Activated naive CD4-positive, alpha-beta T cell treated with anti-CD3 and anti-CD28 coated beads, Interleukin-2, amount 10 ng/mL, durations not matched to agents 7 days and 5 days (primary cell): ENCODE measurements at regions of chr7 and their contacts with region 1.

Region 1: GRCh38 chr7:99990460-99990852 is 14.6 kb upstream of the AZGP1 start:
- DNase-seq: no peak
- H3K4me3 Mint-ChIP-seq: no peak overlapping the region
- H3K27ac Mint-ChIP-seq: no peak overlapping the region
- H3K4me1 Mint-ChIP-seq: peaks cover 17% of the 10 kb centered on the region
- H3K27me3 Mint-ChIP-seq: peaks cover 49% of the 10 kb centered on the region

Region 2: DNA sequence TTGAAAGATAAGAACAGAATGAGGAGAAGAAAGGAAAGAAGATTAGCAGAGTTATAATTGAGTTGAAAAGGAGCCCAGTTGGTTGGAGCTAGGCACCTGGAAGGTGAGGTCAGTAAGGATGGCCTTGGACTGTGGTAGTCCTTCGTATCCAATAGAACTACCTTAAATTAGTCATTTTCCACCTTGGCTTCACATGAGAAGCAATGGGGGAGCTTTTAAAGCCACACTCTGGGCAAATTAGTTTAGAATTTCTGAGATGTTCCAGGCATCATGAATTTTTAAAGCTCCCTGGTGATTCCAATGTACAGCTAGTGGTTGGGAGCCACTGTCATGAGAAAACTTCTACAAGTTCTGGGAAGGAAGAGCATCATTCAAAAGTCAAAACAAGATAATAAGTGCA is 283.4 kb before region 1 on chr7:
- CTCF ChIA-PET with region 1: no interaction called
- DNase-seq: no peak
- H3K4me3 Mint-ChIP-seq: no peak overlapping the region
- H3K27ac Mint-ChIP-seq: no peak overlapping the region
- H3K4me1 Mint-ChIP-seq: no peaks in the 10 kb centered on the region
- H3K27me3 Mint-ChIP-seq: no peaks in the 10 kb centered on the region

Region 3: DNA sequence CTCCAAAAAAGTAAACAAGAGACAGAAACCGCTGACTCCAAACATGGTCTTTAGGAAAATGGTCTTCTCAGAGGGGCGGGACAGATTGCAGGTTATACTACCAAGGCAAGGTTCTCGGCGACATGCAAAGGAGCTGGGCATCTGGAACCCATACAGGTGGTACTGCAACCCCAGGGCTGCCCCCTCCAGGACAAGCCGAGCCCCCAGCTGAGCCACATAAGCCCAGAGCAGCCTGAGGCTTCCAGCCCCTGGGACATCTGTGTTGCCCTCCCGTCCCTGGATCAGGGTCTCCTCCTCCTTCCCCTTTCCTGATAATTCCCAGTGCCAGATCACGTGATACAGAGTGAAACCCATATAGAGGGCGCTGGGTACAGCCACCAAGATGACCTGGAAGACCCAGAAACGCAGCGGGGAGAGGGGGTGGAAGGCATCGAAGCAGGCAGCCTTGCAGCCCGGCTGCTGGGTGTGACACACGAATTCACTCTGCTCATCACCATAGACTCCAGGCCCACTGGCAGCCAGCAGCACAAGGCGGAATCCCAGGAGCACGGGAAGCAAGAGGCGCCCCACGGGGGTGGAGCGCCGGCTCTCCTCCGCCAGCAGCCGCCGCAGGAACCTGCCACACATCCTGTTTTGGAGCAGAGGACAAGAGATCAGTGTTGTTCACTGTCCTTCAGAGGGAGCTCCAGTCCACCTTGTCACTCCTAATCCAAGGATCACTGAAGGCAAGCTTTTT is 61.3 kb before region 1 on chr7 and contains the start of gene GJC3:
- CTCF ChIA-PET with region 1: interaction called, 11 read pairs
- DNase-seq: peak; percentile 68
- H3K4me3 Mint-ChIP-seq: peak within 1 kb of the TSS; percentile 56
- H3K27ac Mint-ChIP-seq: peak within 1 kb of the TSS; percentile 53
- H3K4me1 Mint-ChIP-seq: peaks cover 30% of the 10 kb centered on the region
- H3K27me3 Mint-ChIP-seq: peaks cover 45% of the 10 kb centered on the region

Region 4: GRCh38 chr7:99975782-99976521 is 14.5 kb before region 1 on chr7 and contains the start of gene AZGP1:
- CTCF ChIA-PET with region 1: interaction called, 23 read pairs
- DNase-seq: no peak
- H3K4me3 Mint-ChIP-seq: no peak within 1 kb of the TSS
- H3K27ac Mint-ChIP-seq: no peak within 1 kb of the TSS
- H3K4me1 Mint-ChIP-seq: no peaks in the 10 kb centered on the region
- H3K27me3 Mint-ChIP-seq: peaks cover 25% of the 10 kb centered on the region

Region 5: DNA sequence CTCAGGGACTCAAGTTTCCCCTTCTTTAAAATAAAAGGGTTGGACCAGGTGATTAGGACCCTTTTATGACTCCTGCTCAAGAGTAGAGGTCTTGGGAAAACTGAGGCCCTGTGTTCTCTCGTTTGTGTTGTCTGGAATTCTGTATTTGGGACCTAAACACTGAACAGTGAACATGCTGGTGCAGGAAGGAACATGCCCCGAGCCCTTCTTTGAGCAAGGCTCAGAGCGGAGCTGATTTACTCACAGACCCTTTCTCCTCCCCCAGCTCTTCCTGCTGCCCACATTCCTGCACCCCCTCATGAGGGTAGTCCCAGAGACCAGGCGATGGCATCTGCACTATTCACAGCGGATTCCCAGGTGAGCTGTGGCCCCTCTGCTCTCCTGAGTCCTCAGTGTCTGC is 39.1 kb after region 1 on chr7:
- CTCF ChIA-PET with region 1: no interaction called
- DNase-seq: no peak
- H3K4me3 Mint-ChIP-seq: no peak overlapping the region
- H3K27ac Mint-ChIP-seq: no peak overlapping the region
- H3K4me1 Mint-ChIP-seq: peaks cover 3% of the 10 kb centered on the region
- H3K27me3 Mint-ChIP-seq: no peaks in the 10 kb centered on the region

Region 6: GRCh38 chr7:100053215-100053614 is 62.8 kb after region 1 on chr7:
- CTCF ChIA-PET with region 1: interaction called, 67 read pairs
- DNase-seq: peak; percentile 49
- H3K4me3 Mint-ChIP-seq: no peak overlapping the region
- H3K27ac Mint-ChIP-seq: no peak overlapping the region
- H3K4me1 Mint-ChIP-seq: peaks cover 20% of the 10 kb centered on the region
- H3K27me3 Mint-ChIP-seq: no peaks in the 10 kb centered on the region